Upper lobe of right lung (tissue), 1 donor: ENCODE measurements at regions of chr17 and their contacts with region 1.

Region 1: DNA sequence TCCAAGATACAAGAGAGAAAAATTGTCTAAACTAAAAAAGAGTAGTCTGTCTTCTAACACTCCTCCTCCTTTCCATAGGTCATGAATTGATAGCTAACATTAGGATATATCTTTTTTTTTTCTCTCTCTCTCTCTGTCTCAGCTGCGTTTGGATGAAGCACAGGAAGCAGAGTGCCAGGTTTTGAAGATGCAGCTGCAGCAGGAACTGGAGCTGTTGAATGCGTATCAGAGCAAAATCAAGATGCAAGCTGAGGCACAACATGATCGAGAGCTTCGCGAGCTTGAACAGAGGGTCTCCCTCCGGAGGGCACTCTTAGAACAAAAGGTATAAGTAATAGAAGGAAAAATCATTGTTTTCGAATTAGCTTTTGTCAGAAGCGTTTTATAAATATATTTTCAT is 32.9 kb downstream of the ABHD15 start:
- DNase-seq: no peak
- ATAC-seq: no peak
- H3K4me3 ChIP-seq: no peak overlapping the region
- H3K27ac ChIP-seq: no peak overlapping the region
- H3K4me1 ChIP-seq: no peaks in the 10 kb centered on the region
- H3K27me3 ChIP-seq: no peaks in the 10 kb centered on the region
- CTCF ChIP-seq: no peak

Region 2: DNA sequence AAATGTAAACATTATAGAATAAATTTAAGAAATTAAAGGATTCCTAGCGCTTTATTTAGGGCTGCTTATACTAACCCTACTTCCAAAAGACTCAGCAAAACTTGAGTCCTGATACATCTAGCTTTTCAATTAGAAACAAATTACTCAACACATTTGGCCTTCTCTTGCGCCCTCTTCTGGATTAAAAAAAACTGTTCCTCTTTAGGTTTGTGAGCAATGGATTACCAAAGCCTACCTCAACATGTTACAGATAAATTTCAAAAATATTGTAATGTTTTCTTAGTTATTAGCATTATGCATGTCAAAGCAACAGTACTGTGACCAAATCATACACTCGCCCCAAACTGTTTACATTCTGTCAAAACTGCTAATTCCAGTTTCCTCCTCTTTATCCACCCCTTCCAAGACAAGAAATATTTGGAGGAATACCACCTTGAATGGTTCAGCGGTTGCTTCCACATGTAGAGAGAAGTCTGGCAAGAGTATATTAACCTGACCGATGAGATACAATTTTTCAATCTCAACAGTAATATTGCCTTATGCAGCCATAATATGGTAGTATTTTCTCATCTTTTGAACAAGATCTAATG is 242.7 kb before region 1 on chr17:
- intact Hi-C with region 1: no loop called
- DNase-seq: no peak
- ATAC-seq: no peak
- H3K4me3 ChIP-seq: peak overlapping the region; percentile 93
- H3K27ac ChIP-seq: no peak overlapping the region
- H3K4me1 ChIP-seq: peaks cover 48% of the 10 kb centered on the region
- H3K27me3 ChIP-seq: no peaks in the 10 kb centered on the region
- CTCF ChIP-seq: peak; percentile 71

Region 3: DNA sequence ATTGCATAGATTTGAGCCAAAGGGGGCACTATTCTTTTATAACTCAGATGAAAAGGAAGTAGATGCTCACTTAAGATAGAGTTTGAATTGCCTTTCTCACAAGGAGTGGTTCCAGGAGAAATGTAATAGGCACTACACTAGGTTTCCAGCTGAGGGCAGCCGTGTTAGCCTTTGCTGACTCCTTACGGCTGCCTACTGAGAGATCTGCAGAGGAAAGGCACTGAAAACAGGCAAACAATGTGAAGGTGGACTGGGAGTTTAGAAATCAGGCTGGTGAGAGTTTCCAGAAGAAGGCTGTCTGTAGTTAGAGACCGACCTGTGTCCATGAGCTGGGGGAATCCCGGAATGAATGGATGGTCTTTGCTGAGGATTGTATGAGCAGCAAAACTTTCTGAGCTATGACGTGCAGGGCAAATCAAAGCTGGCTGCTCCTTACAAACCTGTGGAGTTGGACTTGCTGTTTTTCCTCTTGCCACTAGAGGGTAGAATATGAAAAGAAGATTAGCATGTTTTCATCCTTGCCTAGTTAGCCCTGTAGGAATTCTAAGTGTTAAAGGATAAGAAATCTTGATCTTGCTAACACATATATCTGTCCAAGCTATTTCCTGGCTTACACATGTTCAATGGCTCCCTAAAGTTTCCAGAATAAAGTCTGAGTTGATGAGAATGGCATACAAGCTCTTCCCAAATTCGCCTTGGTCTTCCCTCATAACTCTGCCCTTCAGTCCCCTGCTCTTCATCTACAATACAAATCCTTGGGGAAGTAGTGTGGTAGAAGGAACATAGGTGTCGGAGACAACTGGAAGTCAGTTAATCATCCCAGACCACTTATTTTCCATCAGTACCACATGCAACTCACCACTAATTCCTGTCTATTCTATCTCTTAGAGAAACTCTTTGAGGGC is 163.9 kb before region 1 on chr17:
- intact Hi-C with region 1: loop called (anchors 5 kb)
- DNase-seq: no peak
- ATAC-seq: peak; percentile 95
- H3K4me3 ChIP-seq: no peak overlapping the region
- H3K27ac ChIP-seq: no peak overlapping the region
- H3K4me1 ChIP-seq: no peaks in the 10 kb centered on the region
- H3K27me3 ChIP-seq: no peaks in the 10 kb centered on the region
- CTCF ChIP-seq: peak; percentile 77